Posterior cingulate gyrus (tissue), 11 donors: ENCODE measurements at regions of chr6 and their contacts with region 1.

Region 1: GRCh38 chr6:30483677-30484279 is 5.5 kb upstream of the HLA-E start:
- DNase-seq: peak in 1 of 10 donors; percentile 29

Region 2: DNA sequence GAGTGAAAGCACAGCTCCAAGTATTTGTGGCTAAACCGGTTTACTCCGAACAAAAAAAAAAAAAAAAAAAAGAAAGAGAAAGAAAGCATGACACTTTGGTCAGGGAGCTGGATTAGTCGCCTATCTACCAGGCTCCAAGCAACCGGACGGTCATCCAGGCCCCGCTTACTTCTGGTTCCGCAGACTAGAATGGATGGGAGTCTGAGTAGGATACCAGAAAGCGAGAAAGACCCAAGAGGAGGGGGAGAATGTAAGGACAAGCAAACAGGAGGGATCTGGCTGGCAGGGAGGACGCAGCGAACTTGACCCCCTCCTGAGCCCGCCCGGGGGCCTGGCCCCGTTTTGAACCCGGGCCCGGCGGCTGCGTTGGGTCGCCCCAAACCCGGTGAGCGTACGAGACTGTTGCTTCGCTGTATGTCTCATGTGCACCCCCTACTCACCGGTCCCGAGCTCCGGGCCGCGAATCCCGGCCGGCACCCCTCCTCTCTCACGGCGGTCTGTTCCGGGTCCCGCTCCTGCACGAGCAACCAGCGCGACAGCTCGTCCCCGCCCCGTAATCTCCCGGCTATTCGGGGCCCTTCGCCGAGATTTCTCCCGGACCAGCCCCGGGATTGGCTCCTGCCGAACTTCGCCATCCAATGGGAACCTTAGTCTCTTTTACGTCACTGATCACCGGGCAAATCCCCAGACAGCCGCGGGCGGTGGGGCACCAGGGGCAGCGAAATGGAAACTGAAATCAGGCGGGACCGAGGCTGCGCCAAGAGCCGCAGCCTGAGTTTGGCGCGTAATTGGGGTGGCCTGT is 270.7 kb before region 1 on chr6 and contains the start of gene TRIM26:
- intact Hi-C with region 1: no loop called
- DNase-seq: peak; percentile 93 to 99 (median 97)

Region 3: DNA sequence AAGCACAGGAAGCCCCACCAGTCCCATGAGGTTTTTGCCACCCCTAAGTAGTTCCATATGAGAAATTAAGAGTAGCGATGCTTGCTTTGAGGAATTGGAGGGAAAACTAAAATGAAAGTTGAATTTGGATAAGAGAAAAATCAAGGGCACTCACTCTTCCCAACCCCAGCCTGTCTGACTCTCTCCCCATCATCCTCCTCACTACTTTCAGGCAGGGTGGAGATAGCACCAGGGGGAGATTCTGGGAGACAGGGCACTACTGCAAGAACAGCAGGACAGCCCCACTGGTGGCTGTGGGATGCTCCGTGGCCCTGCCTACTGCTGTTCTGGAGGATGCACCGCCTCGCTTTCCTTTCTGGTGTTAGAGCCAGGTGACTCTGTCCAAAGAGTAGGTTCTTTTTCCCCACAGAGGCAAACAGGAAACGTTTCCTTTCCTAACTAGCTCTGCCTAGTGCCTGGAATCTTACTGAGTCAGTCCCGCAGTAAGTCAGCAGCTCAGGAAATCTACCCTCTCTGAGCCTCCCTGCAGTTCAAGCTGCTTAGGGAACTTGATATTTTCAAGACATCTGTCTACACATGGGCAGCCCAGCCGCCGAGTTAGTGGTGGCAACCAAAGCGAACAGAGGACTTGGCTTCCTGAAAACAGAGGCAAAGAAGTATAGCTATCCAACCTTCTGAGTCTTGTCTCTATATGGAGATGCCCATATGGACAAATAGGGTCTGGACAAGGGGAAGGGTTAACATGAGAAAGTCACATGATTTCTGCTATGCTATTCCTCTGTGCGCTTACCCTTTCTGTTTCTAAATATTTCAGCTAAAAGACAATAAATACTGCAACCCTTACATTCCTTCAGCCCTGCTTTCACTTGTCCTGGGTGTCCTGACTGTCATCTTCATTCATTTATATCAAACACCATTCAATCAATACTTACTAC is 16.9 kb after region 1 on chr6:
- intact Hi-C with region 1: no loop called
- DNase-seq: peak in 1 of 10 donors; percentile 24

Region 4: DNA sequence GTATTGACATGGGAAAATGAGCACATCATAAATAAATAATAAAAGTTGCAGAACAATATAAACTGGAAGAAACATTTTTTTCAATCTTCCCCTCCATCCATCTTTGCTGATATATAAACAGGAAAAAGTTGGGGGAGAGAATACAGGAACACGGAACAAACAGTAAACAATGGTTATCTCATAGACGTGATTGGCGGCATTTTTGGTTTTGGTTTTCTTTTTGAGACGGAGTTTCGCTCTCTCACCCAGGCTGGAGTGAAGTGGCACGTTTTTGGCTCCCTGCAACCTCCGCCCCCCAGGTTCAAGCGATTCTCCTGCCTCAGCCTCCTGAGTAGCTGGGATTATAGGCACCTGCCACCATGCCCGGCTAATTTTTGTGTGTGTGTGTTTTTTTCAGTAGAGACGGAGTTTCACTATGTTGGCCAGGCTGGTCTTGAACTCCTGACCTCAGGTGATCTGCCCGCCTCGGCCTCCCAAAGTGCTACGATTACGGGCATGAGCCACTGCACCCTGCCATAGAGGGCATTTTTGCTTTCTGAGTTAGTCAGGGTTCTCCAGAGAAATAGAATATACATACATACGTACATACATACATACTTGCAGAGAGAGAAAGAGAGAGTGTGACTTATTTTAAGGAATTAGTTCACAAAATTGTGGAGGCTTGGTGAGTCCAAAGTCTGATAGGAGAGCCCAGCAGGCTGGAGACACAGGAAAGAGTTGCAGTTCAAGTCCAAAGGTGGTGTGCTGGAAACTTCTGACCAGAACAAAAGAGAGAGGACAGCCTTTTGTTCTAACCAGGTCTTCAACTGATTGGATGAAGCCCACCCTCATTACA is 49.9 kb after region 1 on chr6:
- intact Hi-C with region 1: loop called (anchors 1 kb)
- DNase-seq: no peak

Region 5: GRCh38 chr6:30544666-30545272 is 61.0 kb after region 1 on chr6:
- intact Hi-C with region 1: loop called (anchors 2 kb)
- DNase-seq: no peak